ENCODE measurements at regions of chr16 and their contacts with region 1.

Region 1: DNA sequence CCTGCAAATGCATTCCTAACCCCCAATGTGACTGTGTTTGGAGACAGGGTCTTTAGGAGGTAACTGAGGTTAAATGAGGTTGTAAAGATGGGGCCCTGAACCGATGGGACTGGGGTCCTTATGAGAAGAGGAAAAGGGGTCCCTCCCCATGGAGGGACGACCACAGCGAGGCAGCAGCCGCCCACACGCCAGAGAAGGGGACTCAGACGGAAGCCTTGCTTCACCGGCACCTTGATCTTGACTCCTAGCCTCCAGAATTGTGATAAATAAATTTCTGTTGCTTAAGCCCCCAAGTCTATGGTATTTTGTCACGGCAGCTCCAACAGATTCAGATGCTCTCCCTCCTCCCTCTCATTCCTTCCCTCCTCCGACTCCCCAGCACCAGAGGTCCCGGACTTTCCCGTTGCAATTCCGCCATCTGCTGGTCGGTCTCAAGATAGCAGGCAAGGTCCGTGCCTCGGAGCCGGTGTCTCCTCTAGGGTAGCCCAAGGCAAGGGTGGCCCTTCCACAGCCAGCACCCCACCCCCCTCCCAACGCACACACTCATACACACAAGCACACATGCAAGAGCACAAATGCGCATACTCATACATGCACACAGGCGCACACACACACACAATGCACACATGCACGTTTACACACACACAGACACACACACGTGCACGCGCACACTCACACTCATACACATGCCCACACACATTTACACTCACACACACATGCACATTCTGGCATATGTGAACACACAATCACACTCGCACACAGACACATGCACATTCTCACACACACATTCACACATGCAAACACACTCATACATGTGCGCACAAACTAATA is 23.1 kb upstream of the C16orf78 start:
- DNase-seq: peak; percentile 54 to 67
- ATAC-seq: peak; percentile 54 to 74 (median 64)
- H3K4me3 ChIP-seq: no peak overlapping the region
- H3K27ac ChIP-seq: no peak overlapping the region
- H3K4me1 ChIP-seq: peaks cover 0 to under 1% (median 0%) of the 10 kb centered on the region in 9 donors
- H3K27me3 ChIP-seq: peaks cover 0 to 51% (median 41%) of the 10 kb centered on the region in 7 donors
- CTCF ChIP-seq: peak; percentile 73 to 88 (median 81)

Region 2: DNA sequence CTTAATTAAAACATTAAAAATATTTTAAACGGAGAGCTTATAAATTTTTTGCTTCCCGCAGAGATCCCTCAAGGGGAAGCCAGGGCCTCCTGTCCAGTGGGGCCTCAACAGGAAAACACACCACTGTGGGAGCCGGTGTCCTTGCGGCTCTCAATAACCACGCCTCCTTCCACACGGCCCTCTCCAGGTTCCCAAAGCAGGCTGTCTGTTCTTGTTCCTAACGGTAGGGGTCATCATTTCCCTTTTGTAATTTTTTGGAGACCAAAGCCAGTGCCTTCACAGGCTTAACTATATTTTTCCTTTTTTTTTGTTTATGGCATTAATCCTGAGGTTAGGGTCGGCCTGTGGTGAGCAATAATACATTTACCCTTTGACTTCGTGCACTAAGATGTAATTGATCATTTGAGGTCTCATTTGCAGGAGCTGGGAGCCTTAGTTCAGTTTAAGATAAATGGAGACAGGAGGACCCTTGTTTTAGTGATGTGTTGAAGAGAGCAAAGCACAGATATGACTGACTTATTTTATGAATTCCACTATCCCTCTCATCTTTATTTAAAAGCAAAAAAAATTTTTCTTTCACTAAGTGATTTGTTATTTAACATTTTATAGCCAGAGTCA is 663.0 kb before region 1 on chr16:
- intact Hi-C with region 1: loop called (anchors 1 to 2 kb)
- DNase-seq: peak; percentile 20 to 51
- ATAC-seq: peak in 7 of 8 donors; percentile 65 to 86 (median 82)
- H3K4me3 ChIP-seq: no peak overlapping the region
- H3K27ac ChIP-seq: no peak overlapping the region
- H3K4me1 ChIP-seq: peaks cover 0 to 4% (median 0%) of the 10 kb centered on the region in 9 donors
- H3K27me3 ChIP-seq: peaks cover 0 to 8% (median 0%) of the 10 kb centered on the region in 7 donors
- CTCF ChIP-seq: peak; percentile 46 to 86 (median 78)

Region 3: GRCh38 chr16:48892893-48893292 is 457.6 kb before region 1 on chr16:
- intact Hi-C with region 1: loop called in 1 of 10 experiments (anchors 10 kb)
- DNase-seq: no peak
- ATAC-seq: no peak
- H3K4me3 ChIP-seq: no peak overlapping the region
- H3K27ac ChIP-seq: no peak overlapping the region
- H3K4me1 ChIP-seq: no peaks in the 10 kb centered on the region
- H3K27me3 ChIP-seq: peaks cover 0 to 26% (median 12%) of the 10 kb centered on the region in 7 donors
- CTCF ChIP-seq: no peak

Region 4: DNA sequence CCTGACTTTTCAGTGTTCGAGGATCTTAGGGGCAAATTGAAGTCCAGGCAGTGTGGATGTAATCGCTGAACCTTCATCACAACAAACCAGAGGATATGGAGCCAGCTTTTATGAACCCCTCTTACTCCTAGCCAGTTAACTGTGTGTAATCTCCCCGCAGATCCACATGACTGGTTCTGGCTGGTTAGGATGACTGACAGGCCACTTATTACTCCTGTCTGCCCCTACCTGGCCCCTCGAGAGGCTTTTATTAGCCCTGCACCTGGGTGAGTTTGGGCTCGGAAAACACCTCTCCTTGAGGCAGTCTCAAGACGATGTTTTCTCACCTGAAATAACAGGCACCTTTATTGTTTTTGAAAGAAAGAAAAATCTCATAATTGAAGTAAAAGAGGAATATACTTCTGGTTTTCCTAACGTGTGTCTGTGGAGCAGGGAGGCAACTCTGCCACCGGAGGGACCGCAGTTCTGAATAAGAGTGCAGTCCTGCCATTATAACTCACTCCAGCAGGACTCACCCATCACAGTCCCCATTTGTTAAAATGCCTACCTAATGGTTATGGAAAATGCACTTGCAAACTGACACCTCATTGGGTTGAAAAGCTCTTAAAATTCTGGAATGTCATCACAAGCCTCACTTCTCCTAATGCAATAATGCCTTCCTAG is 448.6 kb before region 1 on chr16:
- intact Hi-C with region 1: loop called in 2 of 10 experiments (anchors 10 kb)
- DNase-seq: no peak
- ATAC-seq: no peak
- H3K4me3 ChIP-seq: no peak overlapping the region
- H3K27ac ChIP-seq: no peak overlapping the region
- H3K4me1 ChIP-seq: no peaks in the 10 kb centered on the region
- H3K27me3 ChIP-seq: peaks cover 0 to 43% (median 35%) of the 10 kb centered on the region in 7 donors
- CTCF ChIP-seq: peak in 3 of 9 donors; percentile 10 to 26 (median 20)

Region 5: GRCh38 chr16:48911700-48912099 is 438.8 kb before region 1 on chr16:
- intact Hi-C with region 1: loop called in 2 of 10 experiments (anchors 10 kb)
- DNase-seq: no peak
- ATAC-seq: no peak
- H3K4me3 ChIP-seq: no peak overlapping the region
- H3K27ac ChIP-seq: no peak overlapping the region
- H3K4me1 ChIP-seq: peaks cover 0 to 6% (median 0%) of the 10 kb centered on the region in 9 donors
- H3K27me3 ChIP-seq: peaks cover 0 to 19% (median 2%) of the 10 kb centered on the region in 7 donors
- CTCF ChIP-seq: peak in 7 of 9 donors; percentile 8 to 53 (median 36)

Region 6: DNA sequence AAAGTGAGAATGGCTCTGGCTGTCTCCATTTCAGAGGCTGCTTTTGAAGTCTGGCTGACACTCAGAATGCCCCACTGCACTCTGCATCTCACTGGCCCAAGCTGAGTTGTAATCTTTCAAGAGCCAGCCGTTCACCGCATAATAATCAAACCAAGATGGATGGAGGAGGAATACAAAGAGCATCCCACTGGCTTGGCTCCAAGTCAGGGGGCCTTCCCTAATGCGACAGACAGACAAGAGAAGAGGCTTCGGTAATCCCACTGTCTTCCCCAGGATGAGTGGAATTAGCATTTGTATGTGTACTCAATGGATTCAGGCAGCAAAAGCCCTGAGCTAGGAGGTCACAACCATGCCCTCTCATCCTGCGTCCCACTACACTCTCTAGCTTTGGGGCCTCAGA is 136.9 kb before region 1 on chr16:
- intact Hi-C with region 1: loop called in 1 of 10 experiments (anchors 10 kb)
- DNase-seq: no peak
- ATAC-seq: no peak
- H3K4me3 ChIP-seq: no peak overlapping the region
- H3K27ac ChIP-seq: no peak overlapping the region
- H3K4me1 ChIP-seq: no peaks in the 10 kb centered on the region
- H3K27me3 ChIP-seq: peaks cover 0 to 28% (median 3%) of the 10 kb centered on the region in 7 donors
- CTCF ChIP-seq: no peak